OCI-LY7 (cell line): ENCODE measurements at regions of chr6 and their contacts with region 1.

Region 1: DNA sequence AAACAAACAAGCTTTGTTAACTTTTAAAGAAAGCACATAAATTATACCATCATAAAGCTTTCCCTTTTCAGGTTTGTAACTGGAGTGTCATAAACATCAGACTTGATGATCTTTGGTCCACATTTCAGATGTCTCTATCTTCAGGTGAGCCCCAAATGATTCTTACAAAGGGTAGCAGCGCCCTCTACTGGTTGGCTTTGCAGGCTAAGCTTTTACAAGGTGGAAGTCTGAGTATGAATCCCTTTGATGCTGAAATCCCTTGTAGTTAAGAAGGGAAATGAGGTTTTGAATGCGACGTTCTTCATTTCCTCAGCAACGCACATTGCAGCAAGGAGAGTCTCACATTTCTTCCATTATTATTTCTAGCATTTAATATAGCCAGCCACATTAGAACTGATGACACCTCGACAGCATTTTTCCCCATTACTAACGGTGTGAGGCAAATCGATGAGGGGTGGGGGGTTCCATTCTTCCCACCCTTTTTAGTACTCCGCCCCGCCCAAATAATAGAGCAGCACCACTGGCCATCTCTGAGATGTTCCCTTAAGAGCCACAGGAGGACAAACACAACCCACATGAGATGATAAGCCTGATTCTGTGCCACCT is 126.3 kb upstream of the NT5E start:
- DNase-seq: peak; percentile 79
- H3K4me3 ChIP-seq: no peak overlapping the region
- H3K27ac ChIP-seq: no peak overlapping the region
- H3K4me1 ChIP-seq: no peaks in the 10 kb centered on the region
- CTCF ChIP-seq: peak; percentile 99

Region 2: GRCh38 chr6:83615025-83615999 is 1708.2 kb before region 1 on chr6:
- CTCF ChIA-PET with region 1: no interaction called
- POLR2A ChIA-PET with region 1: no interaction called
- intact Hi-C with region 1: loop called (anchors 5 kb)
- DNase-seq: peak; percentile 49
- H3K4me3 ChIP-seq: no peak overlapping the region
- H3K27ac ChIP-seq: no peak overlapping the region
- H3K4me1 ChIP-seq: no peaks in the 10 kb centered on the region
- CTCF ChIP-seq: peak; percentile 82

Region 3: DNA sequence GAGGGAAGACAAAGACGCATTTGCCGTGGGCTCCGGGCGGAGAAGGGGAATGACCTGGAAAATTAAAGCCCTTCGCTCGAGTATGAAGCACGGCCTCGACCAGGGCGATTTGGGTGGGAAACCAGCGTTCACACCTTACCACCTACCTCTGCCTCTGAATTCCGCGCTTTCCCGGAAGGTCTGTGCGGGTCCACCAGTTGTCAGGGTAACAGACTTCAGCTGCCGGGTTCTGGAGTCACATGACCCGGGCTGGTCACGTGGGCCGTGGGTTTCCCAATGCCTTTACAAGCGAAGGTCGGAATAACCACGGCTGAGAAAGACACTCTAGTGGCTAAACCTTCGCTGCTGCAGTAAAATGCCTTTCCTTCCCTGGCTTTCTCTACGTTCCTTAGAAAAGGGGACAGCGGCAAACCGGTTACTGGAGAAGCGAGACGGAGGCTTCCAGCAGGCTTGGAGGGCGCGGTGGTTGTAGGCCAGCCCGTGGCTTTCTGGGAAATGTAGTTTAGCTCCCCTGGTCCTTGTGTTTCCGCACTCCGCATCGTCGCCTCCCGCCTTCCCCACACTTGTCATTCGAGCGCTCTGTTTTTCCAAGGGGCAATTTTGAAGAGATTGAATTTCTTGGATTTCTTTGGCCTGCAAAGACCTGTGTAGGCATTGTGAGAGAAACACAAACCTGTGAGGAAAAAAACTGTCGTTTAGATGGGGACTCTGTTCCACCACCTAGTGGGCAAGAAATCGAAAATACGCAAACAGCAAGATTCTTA is 1095.9 kb before region 1 on chr6 and contains the start of gene CEP162:
- CTCF ChIA-PET with region 1: no interaction called
- POLR2A ChIA-PET with region 1: no interaction called
- intact Hi-C with region 1: loop called (anchors 5 kb)
- DNase-seq: peak; percentile 90
- H3K4me3 ChIP-seq: peak within 1 kb of the TSS; percentile 93
- H3K27ac ChIP-seq: peak within 1 kb of the TSS; percentile 26
- H3K4me1 ChIP-seq: peaks cover 9% of the 10 kb centered on the region
- CTCF ChIP-seq: peak; percentile 89
- total RNA-seq, gene CEP162: 6.3 and 8.9 TPM in 2 replicates

Region 4: GRCh38 chr6:84428300-84428907 is 895.1 kb before region 1 on chr6:
- CTCF ChIA-PET with region 1: no interaction called
- POLR2A ChIA-PET with region 1: no interaction called
- intact Hi-C with region 1: loop called (anchors 1 kb)
- DNase-seq: peak; percentile 21
- H3K4me3 ChIP-seq: no peak overlapping the region
- H3K27ac ChIP-seq: no peak overlapping the region
- H3K4me1 ChIP-seq: no peaks in the 10 kb centered on the region
- CTCF ChIP-seq: peak; percentile 81